Heart right ventricle (tissue), 16 donors: ENCODE measurements at regions of chr7 and their contacts with region 1.

Region 1: DNA sequence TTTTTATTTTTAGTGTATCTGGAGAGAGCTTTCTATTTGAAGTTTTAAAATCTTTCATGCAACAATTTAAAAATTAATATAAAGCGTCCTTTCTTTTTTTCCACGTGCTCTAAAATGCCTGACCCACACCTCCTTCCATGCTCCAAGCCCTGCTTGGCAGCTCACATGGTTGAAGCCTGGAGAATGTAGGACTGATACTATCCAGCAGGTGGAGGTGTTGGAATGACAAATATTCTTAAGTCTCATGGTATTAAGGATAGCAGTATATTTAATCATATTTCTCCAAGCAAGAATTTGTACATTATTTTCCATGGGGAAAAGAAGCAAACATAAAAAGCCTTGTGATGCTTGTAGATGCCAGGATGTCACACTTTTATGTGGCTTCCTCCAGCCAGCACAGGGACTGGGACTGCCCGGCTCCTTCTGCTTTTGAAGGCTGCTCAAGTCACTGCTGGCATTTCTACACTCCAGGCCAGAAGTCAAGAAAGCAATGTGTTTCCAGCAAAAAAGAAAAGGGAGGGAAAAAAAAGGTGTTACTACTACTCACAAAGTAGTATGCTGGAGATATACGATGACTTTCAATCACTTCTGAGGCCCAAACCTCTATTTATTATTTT is 49.7 kb downstream of the BZW2 start:
- DNase-seq: peak in 1 of 2 donors; percentile 29
- ATAC-seq: peak in 7 of 8 donors; percentile 68 to 80 (median 77)
- H3K4me3 ChIP-seq: no peak overlapping the region
- H3K27ac ChIP-seq: no peak overlapping the region
- H3K4me1 ChIP-seq: no peaks in the 10 kb centered on the region
- H3K27me3 ChIP-seq: no peaks in the 10 kb centered on the region
- CTCF ChIP-seq: peak in 8 of 9 donors; percentile 33 to 73 (median 62)

Region 2: DNA sequence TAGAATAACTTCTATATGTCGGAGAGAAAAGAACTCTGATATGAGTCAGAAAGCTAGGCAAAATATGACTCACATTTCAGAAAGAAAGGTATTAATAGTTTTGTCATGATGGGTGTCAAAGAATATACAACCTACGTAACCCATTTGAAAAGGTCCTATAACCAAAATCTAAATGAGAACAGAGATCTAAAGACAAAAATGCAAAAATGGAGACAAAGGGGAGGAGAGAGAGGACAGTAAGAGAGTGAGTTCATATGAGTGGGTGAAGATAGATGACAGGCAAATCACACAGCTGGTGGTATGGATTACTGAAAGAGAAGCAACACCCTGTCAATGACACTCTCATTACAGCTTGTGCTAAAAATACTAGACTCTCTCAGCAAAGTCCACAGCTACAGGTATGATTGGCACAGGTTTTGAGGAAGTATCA is 75.7 kb before region 1 on chr7:
- intact Hi-C with region 1: loop called in 1 of 10 experiments (anchors 5 kb)
- DNase-seq: no peak
- ATAC-seq: peak in 4 of 8 donors; percentile 26 to 74 (median 53)
- H3K4me3 ChIP-seq: no peak overlapping the region
- H3K27ac ChIP-seq: no peak overlapping the region
- H3K4me1 ChIP-seq: no peaks in the 10 kb centered on the region
- H3K27me3 ChIP-seq: no peaks in the 10 kb centered on the region
- CTCF ChIP-seq: no peak

Region 3: GRCh38 chr7:16634271-16634738 is 61.4 kb before region 1 on chr7:
- intact Hi-C with region 1: loop called in 1 of 10 experiments (anchors 10 kb)
- DNase-seq: no peak
- ATAC-seq: peak in 7 of 8 donors; percentile 39 to 86 (median 57)
- H3K4me3 ChIP-seq: peak overlapping the region in 1 of 10 donors; percentile 5
- H3K27ac ChIP-seq: peak overlapping the region in 5 of 10 donors; percentile 3 to 46 (median 18)
- H3K4me1 ChIP-seq: peaks cover 5 to 51% (median 40%) of the 10 kb centered on the region in 9 donors
- H3K27me3 ChIP-seq: no peaks in the 10 kb centered on the region
- CTCF ChIP-seq: no peak

Region 4: DNA sequence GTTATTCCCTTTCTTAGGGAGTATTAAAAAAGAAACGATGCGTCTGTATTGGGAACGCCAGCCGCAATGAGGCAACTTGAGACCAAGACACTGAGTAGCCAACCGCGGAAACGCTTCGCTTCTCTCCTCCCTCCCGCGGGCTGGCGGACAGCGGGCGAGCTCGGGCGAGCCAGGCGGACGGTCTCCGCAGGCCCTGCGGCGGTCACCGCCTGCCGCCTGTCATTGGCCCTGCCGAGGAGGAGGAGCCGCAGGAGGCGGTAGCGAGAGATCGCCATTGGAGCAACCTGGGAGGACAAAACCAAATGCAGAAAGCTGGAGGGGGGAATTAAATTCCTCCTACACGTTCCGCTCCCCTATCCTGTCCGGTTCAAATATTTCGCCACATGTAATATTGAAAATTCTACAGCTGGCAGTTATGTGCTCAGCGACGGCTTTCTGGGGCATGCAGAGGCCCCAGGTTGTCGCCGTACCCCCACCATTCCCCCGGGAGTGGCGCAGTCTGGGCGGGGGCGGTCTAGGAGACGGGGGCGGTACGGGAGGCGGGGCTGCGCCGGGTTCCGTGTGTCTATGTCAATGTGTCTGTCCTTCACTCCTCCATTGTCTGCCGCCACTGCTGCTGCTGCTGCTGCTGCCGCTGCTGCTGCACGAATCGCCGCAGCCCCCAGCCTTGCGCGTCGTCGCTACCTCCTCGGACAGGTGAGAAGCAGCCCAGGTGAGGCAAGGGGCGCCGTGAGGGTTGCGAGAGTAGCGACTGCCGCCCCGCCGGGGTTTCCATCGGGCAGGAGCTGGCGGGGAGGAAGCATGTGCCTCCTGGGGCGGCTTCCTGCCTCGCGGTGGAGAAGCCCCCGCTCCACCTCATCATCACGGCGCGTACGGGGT is 49.9 kb before region 1 on chr7 and contains the starts of genes ANKMY2 and BZW2:
- intact Hi-C with region 1: loop called in 1 of 10 experiments (anchors 10 kb)
- DNase-seq: peak; percentile 95
- ATAC-seq: peak; percentile 94 to 97 (median 96)
- H3K4me3 ChIP-seq: peak within 1 kb of the TSS; percentile 74 to 98 (median 90)
- H3K27ac ChIP-seq: peak within 1 kb of the TSS; percentile 73 to 98 (median 92)
- H3K4me1 ChIP-seq: peaks cover 6 to 80% (median 64%) of the 10 kb centered on the region in 9 donors
- H3K27me3 ChIP-seq: no peaks in the 10 kb centered on the region
- CTCF ChIP-seq: peak in 4 of 9 donors; percentile 13 to 46 (median 26)
- total RNA-seq, gene ANKMY2: 21.1 to 46.7 (median 35.8) TPM
- total RNA-seq, gene BZW2: 231 to 470 (median 351) TPM

Region 5: DNA sequence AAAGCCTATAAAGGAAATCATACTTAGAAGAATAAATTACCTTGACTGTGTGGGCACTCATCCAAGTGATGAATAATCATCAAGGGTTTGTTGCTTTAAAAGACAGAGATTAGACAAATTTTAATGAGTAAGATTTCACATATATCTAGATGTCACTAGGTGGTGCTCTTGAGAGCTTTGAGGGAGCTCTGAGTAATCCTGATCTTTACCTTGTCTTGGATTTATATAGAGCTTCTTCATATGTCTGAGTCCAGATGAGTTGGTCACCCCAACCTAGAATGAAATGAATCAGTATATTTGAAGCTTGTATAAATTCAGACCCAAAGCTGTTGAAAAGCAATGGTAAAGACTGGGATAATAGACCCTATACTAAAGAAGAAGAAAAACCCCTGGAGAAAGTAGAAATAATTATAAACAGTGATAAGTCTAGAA is 105.4 kb after region 1 on chr7:
- intact Hi-C with region 1: loop called in 1 of 10 experiments (anchors 10 kb)
- DNase-seq: no peak
- ATAC-seq: no peak
- H3K4me3 ChIP-seq: no peak overlapping the region
- H3K27ac ChIP-seq: no peak overlapping the region
- H3K4me1 ChIP-seq: no peaks in the 10 kb centered on the region
- H3K27me3 ChIP-seq: no peaks in the 10 kb centered on the region
- CTCF ChIP-seq: peak in 8 of 9 donors; percentile 20 to 60 (median 50)

Region 6: DNA sequence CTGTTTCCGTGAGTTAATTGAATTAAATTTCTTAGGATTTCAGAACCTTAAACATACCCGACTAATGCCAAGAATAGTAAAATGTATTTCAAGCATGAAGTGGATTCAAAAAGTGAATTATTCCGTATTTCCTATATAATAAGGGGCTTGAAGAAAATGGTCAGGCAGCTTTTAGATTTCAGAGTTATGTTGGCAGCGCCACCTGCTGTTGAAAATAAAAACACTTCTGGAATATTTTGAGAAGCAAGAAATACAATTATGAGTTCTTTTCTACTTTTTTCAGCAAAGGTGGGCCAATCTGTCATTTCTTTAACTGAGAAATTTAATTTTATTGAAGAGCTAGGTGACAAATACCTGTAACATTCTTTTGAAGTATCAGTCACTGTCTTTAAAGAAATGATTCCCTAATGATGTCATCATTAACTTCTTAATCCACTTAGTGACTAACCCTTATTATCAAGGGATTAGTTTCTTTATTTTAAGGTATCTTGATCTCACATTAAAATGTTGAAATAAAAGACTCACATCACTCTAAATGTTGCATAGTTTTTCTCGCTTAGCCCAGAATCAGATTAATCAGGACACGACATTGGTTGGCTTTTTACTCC is 222.7 kb after region 1 on chr7:
- intact Hi-C with region 1: loop called (anchors 2 to 5 kb)
- DNase-seq: peak in 1 of 2 donors; percentile 21
- ATAC-seq: no peak
- H3K4me3 ChIP-seq: no peak overlapping the region
- H3K27ac ChIP-seq: no peak overlapping the region
- H3K4me1 ChIP-seq: no peaks in the 10 kb centered on the region
- H3K27me3 ChIP-seq: no peaks in the 10 kb centered on the region
- CTCF ChIP-seq: peak; percentile 64 to 84 (median 76)